ENCODE measurements at regions of chr14 and their contacts with region 1.

Region 1: DNA sequence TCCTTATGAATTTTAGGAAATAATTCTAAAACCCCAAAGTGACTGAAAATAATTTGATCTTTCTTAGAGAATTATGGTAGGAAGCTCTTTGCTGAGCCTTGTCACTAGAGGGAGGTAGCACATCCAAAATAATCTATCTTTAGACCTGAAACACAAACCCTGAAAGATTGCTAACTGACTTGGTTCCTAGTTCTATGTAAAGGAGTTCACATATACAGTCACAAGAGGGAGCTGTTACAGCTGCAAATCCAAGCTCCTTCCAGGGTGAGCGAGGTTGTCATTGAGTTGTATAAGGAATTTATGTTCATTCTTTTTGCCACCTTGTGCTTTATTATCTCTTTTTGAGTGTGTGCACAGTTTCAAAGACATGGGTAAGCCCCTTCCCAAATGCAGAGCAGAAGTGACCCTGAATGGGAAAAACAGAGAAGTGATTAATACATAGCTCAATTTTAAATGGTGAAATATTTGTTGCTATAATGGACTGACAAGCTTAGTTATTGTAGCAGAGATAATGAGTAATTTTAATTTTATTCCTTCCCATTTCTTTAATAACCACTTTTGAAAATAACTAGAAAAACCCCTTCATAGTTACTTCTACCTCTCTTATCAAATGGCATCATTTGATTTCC is 387.9 kb downstream of the DAD1 start:
- DNase-seq: peak; percentile 10
- ATAC-seq: peak; percentile 95
- H3K4me3 Mint-ChIP-seq: no peak overlapping the region
- H3K27ac Mint-ChIP-seq: no peak overlapping the region
- H3K4me1 Mint-ChIP-seq: no peaks in the 10 kb centered on the region
- H3K27me3 Mint-ChIP-seq: peaks cover 3% of the 10 kb centered on the region; the same call in 1 of the 2 replicates
- CTCF ChIP-seq: peak; percentile 60

Region 2: DNA sequence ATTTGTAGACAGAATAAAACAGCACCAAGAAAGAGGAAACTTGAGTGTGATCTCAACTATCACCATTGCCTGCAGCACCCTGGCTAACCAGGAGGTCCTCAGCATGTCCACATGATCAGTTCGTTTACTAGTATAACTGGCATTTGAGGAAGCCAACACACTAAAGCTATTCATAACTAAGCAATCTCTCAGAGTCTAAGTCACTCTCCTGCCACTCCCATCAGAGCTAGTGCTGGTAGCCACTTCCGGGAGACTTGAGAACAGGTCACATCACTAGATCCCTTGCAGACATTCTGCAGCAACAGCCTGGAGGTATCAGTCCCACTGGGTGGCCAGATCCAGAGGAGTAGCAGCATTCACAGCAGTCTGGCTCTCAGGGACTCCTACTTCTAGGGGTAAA is 174.6 kb before region 1 on chr14:
- CTCF ChIA-PET with region 1: no interaction called
- POLR2A ChIA-PET with region 1: no interaction called
- DNase-seq: no peak
- ATAC-seq: no peak
- H3K4me3 Mint-ChIP-seq: no peak overlapping the region
- H3K27ac Mint-ChIP-seq: no peak overlapping the region
- H3K4me1 Mint-ChIP-seq: no peaks in the 10 kb centered on the region
- H3K27me3 Mint-ChIP-seq: peaks cover 5% of the 10 kb centered on the region; the same call in 1 of the 2 replicates
- CTCF ChIP-seq: no peak

Region 3: GRCh38 chr14:22099942-22100763 is 100.9 kb before region 1 on chr14:
- CTCF ChIA-PET with region 1: interaction called, 16 read pairs
- POLR2A ChIA-PET with region 1: no interaction called
- DNase-seq: peak; percentile 75
- ATAC-seq: peak; percentile 100
- H3K4me3 Mint-ChIP-seq: no peak overlapping the region
- H3K27ac Mint-ChIP-seq: no peak overlapping the region
- H3K4me1 Mint-ChIP-seq: no peaks in the 10 kb centered on the region
- H3K27me3 Mint-ChIP-seq: peaks cover 10% of the 10 kb centered on the region
- CTCF ChIP-seq: 0 out of 2 replicates have a peak, but pooled peaks have one; percentile 16

Region 4: DNA sequence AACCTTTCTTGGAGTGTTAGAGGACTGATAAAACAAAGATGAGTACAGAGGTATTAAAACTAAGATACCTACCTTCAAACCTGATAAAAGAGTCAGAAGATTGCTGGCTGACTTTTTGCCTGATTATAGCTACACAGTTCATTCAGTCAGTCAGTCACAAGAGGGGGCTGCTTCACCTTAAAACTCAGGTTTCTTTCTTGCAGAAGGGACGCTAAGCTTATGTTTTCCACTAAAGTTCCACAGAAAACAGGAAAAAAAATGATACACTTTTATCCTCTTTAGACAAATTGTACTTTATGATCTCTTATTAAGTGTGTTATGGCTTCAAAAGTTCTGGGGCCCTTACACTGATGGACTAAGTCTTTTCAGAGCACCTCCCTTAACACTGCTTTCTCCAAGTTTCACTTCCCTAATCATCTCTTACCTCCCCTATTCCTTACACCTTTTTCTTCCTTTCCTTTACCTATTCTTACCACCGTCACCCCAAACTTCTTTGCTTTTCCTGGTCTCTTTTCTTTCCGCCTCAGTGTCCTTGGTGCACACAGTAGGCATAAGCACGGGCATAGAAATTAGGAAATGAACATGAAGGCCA is 78.8 kb before region 1 on chr14:
- CTCF ChIA-PET with region 1: interaction called, 40 read pairs
- POLR2A ChIA-PET with region 1: no interaction called
- DNase-seq: no peak
- ATAC-seq: peak; percentile 48; the same call in 1 of the 2 replicates
- H3K4me3 Mint-ChIP-seq: no peak overlapping the region
- H3K27ac Mint-ChIP-seq: no peak overlapping the region
- H3K4me1 Mint-ChIP-seq: no peaks in the 10 kb centered on the region
- H3K27me3 Mint-ChIP-seq: no peaks in the 10 kb centered on the region; the same call in 1 of the 2 replicates
- CTCF ChIP-seq: no peak

Region 5: GRCh38 chr14:22177870-22178269 is 23.2 kb before region 1 on chr14:
- CTCF ChIA-PET with region 1: interaction called, 32 read pairs
- POLR2A ChIA-PET with region 1: no interaction called
- DNase-seq: no peak
- ATAC-seq: no peak
- H3K4me3 Mint-ChIP-seq: no peak overlapping the region
- H3K27ac Mint-ChIP-seq: no peak overlapping the region
- H3K4me1 Mint-ChIP-seq: peaks cover 5% of the 10 kb centered on the region
- H3K27me3 Mint-ChIP-seq: no peaks in the 10 kb centered on the region
- CTCF ChIP-seq: no peak

Region 6: GRCh38 chr14:22230517-22230916 is 29.4 kb after region 1 on chr14:
- CTCF ChIA-PET with region 1: interaction called, 22 read pairs
- POLR2A ChIA-PET with region 1: no interaction called
- DNase-seq: no peak
- ATAC-seq: no peak
- H3K4me3 Mint-ChIP-seq: no peak overlapping the region
- H3K27ac Mint-ChIP-seq: no peak overlapping the region
- H3K4me1 Mint-ChIP-seq: peaks cover 22% of the 10 kb centered on the region
- H3K27me3 Mint-ChIP-seq: peaks cover 3% of the 10 kb centered on the region; the same call in 1 of the 2 replicates
- CTCF ChIP-seq: no peak

Region 7: GRCh38 chr14:22319526-22320361 is 118.7 kb after region 1 on chr14:
- CTCF ChIA-PET with region 1: interaction called, 16 read pairs
- POLR2A ChIA-PET with region 1: no interaction called
- DNase-seq: peak; percentile 40
- ATAC-seq: peak; percentile 79
- H3K4me3 Mint-ChIP-seq: no peak overlapping the region
- H3K27ac Mint-ChIP-seq: no peak overlapping the region
- H3K4me1 Mint-ChIP-seq: peaks cover 3% of the 10 kb centered on the region; the same call in 1 of the 2 replicates
- H3K27me3 Mint-ChIP-seq: no peaks in the 10 kb centered on the region
- CTCF ChIP-seq: peak; percentile 31; the same call in 1 of the 2 replicates

Measured in WTC11 (cell line).